ENCODE measurements at regions of chr1 and their contacts with region 1.

Region 1: GRCh38 chr1:3618881-3619671 is 5.7 kb upstream of the TPRG1L start:
- DNase-seq: peak; percentile 61
- H3K4me3 ChIP-seq: no peak overlapping the region
- H3K27ac ChIP-seq: no peak overlapping the region
- H3K4me1 ChIP-seq: peaks cover 30% of the 10 kb centered on the region
- H3K27me3 ChIP-seq: peaks cover 22% of the 10 kb centered on the region
- CTCF ChIP-seq: peak; percentile 89

Region 2: GRCh38 chr1:3491291-3492246 is 127.5 kb before region 1 on chr1:
- intact Hi-C with region 1: loop called (anchors 2 kb)
- DNase-seq: peak; percentile 81
- H3K4me3 ChIP-seq: no peak overlapping the region
- H3K27ac ChIP-seq: no peak overlapping the region
- H3K4me1 ChIP-seq: peaks cover 3% of the 10 kb centered on the region
- H3K27me3 ChIP-seq: peaks cover under 1% of the 10 kb centered on the region
- CTCF ChIP-seq: peak; percentile 100